ENCODE measurements at regions of chr3 and their contacts with region 1.

Region 1: DNA sequence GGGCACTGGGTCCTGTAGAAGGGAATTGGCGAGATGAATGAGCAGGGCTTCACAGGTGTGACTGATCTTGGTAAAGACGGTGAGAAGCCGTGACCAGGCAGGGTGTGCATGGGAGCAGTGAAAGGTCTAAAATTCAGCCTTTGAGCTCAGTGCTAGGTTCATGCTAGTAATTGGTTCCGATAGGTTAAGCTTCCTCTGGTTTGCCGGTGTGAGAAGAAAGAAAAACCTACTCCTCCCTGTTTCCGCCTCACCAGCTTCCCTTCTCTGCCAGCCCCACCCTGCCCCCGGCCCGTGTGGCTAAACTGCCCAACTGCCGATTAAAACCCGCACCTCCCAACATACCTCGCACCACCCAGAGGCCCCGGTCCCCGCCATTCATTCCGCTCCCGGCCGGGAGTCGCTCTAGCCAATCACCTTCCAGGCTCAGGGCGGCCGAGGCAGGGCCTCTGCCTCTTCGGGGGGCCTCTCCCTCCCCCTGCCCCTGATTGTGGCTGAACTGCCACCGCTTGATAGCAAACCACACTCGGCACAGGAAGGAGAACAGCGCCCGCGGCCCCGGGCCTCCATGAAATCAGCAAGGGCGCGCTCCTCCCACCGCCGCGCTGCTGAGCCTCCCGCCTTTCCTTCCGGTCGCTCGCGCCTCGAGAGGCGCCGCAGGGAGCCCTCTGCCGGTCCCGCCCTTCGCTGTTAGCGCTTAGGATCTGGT is 7.3 kb upstream of the NRROS start:
- DNase-seq: peak; percentile 89 to 91
- H3K4me3 ChIP-seq: peak overlapping the region; percentile 57
- H3K4me3 Mint-ChIP-seq: peak overlapping the region; percentile 94
- H3K27ac Mint-ChIP-seq: peak overlapping the region; percentile 97
- H3K4me1 ChIP-seq: peaks cover 6% of the 10 kb centered on the region; the same call in 1 of the 2 replicates
- H3K4me1 Mint-ChIP-seq: peaks cover 13% of the 10 kb centered on the region
- H3K27me3 ChIP-seq: no peaks in the 10 kb centered on the region
- H3K27me3 Mint-ChIP-seq: no peaks in the 10 kb centered on the region
- CTCF ChIP-seq: peak in 1 of 2 experiments; percentile 67

Region 2: DNA sequence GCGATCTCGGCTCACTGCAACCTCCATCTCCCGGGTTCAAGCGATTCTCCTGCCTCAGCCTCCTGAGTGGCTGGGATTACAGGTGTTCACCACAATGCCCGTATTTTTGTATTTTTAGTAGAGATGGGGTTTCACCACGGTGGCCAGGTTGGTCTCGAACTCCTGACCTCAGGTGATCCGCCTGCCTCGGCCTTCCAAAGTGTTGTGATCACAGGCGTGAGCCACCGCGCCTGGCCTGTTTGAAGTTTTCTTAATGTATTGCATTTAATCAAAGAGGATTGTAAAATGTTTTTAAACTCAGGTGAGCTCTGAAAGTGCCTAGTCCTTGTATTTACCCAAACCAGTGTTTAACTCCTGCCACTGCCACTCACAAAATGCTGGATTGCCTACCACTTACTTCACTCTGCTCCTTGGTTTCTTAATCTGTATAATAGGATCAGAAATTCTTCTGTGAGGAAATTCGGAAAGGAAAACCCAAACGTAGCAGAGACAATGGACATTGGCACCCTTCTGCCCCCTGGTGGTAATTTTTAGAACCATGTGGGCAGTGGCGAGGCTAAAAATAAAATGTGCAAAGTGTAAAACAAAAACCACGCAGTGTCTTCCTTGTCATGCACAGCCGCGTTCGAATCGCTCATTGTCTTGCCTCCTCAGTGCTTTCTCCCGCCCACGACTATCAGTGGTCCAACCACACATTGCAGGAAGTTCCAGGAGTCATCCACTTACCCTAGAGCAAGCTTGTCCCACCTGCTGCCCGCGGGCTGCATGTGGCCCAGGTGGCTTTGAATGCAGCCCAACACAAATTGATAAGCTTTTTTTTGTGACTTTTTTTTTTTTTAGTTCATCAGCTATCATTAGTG is 52.6 kb after region 1 on chr3:
- CTCF ChIA-PET with region 1: no interaction called
- POLR2A ChIA-PET with region 1: no interaction called
- intact Hi-C with region 1: loop called (anchors 2 kb)
- DNase-seq: peak in 1 of 2 experiments; percentile 70
- H3K4me3 ChIP-seq: no peak overlapping the region
- H3K4me3 Mint-ChIP-seq: no peak overlapping the region
- H3K27ac Mint-ChIP-seq: no peak overlapping the region
- H3K4me1 ChIP-seq: no peaks in the 10 kb centered on the region
- H3K4me1 Mint-ChIP-seq: no peaks in the 10 kb centered on the region
- H3K27me3 ChIP-seq: no peaks in the 10 kb centered on the region
- H3K27me3 Mint-ChIP-seq: no peaks in the 10 kb centered on the region
- CTCF ChIP-seq: peak; percentile 81

Measured in Caco-2 (cell line).